HepG2 (cell line): ENCODE measurements at regions of chr22 and their contacts with region 1.

Region 1: GRCh38 chr22:36409911-36410756 is 22.4 kb upstream of the MYH9 start:
- DNase-seq: peak; percentile 97
- ATAC-seq: peak; percentile 94
- H3K4me3 ChIP-seq: peak overlapping the region; percentile 56 to 72 (median 56)
- H3K27ac ChIP-seq: peak overlapping the region; percentile 90
- H3K4me1 ChIP-seq: peaks cover 74% of the 10 kb centered on the region
- H3K27me3 ChIP-seq: no peaks in the 10 kb centered on the region
- CTCF ChIP-seq: no peak
- EP300 ChIP-seq: no peak
- POLR2A ChIP-seq: peak; percentile 83 to 87
- RAD21 ChIP-seq: no peak

Region 2: DNA sequence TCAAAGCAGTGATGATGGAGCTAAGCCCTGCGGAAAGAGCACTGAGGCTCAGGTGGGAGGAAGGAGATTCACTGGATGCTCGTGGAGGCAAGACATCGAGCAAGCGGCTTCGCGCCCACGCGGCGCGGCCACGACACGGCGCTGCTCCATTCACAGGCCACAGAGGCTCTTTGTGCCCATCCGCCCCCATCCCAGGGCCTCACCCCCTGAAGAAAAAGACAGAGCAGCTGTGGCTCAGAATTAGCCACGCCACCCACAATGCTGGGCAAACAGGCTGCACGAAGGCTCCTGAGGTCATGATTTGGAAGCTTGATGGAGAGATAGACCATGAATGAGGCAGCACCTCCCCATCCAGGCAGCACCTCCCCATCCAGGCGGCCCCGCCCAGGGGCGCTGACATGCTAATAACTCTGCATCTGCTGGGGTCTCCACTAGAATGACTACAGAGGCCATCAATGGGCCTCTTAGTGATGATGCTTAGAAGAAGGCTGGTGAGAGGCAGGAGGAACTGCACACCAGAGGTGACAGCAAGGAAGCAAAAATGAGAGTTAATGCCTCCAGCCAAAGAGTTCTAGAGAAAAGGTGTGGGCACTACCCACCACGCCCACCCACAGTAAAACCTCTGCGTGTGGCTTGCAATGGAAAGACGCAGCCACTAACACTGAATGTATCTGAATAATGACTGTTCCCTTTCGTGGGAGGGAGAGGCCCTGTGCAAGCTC is 65.9 kb before region 1 on chr22:
- CTCF ChIA-PET with region 1: no interaction called
- POLR2A ChIA-PET with region 1: interaction called, 12 read pairs
- in situ Hi-C with region 1: no loop called
- intact Hi-C with region 1: no loop called
- DNase-seq: no peak
- ATAC-seq: no peak; the same call in 2 of the 3 replicates
- H3K4me3 ChIP-seq: no peak overlapping the region
- H3K27ac ChIP-seq: peak overlapping the region; percentile 85
- H3K4me1 ChIP-seq: peaks cover 85% of the 10 kb centered on the region
- H3K27me3 ChIP-seq: no peaks in the 10 kb centered on the region
- CTCF ChIP-seq: no peak
- EP300 ChIP-seq: no peak
- POLR2A ChIP-seq: no peak
- RAD21 ChIP-seq: no peak

Region 3: GRCh38 chr22:36398621-36399469 is 11.3 kb before region 1 on chr22:
- CTCF ChIA-PET with region 1: no interaction called
- POLR2A ChIA-PET with region 1: interaction called, 15 read pairs
- in situ Hi-C with region 1: no loop called
- intact Hi-C with region 1: no loop called
- DNase-seq: peak; percentile 51
- ATAC-seq: no peak; the same call in 2 of the 3 replicates
- H3K4me3 ChIP-seq: no peak overlapping the region
- H3K27ac ChIP-seq: no peak overlapping the region
- H3K4me1 ChIP-seq: peaks cover 49% of the 10 kb centered on the region
- H3K27me3 ChIP-seq: no peaks in the 10 kb centered on the region
- CTCF ChIP-seq: no peak
- EP300 ChIP-seq: no peak
- POLR2A ChIP-seq: no peak
- RAD21 ChIP-seq: no peak

Region 4: DNA sequence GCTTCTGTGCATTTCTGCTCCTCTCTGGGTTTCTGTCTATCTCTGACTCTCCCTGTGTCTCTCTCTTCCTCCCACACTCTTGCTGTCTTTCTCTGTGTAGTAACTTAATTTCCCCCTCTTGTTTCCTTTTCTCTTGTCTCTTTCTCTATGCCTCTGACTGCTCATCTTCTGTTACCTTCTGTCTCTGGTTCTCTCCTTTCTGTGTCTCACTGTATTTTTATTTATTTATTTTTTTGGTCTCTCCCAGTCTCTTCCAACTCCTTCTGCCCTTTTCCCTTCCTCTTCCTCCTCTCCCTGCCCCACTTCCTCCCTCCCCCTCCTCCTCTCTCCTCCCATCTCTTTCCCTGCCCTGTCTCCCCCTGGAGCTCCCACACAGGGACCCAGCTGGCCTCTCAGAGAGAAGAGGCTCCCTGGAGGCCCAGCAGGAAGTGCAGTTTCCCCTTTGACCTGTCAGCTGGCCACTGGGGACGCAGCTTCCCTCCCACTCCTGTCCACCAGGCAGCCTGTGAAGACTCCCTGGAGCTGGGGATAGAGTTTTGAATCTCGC is 15.9 kb after region 1 on chr22:
- CTCF ChIA-PET with region 1: no interaction called
- POLR2A ChIA-PET with region 1: interaction called, 63 read pairs
- in situ Hi-C with region 1: no loop called
- intact Hi-C with region 1: no loop called
- DNase-seq: peak; percentile 74
- ATAC-seq: peak; percentile 93
- H3K4me3 ChIP-seq: no peak overlapping the region
- H3K27ac ChIP-seq: peak overlapping the region; percentile 71
- H3K4me1 ChIP-seq: peaks cover 69% of the 10 kb centered on the region
- H3K27me3 ChIP-seq: no peaks in the 10 kb centered on the region
- CTCF ChIP-seq: peak; percentile 53
- EP300 ChIP-seq: no peak; a peak in 1 of 4 replicates
- POLR2A ChIP-seq: peak in 1 of 2 experiments; percentile 34; a peak in 1 of 4 replicates
- RAD21 ChIP-seq: no peak

Region 5: DNA sequence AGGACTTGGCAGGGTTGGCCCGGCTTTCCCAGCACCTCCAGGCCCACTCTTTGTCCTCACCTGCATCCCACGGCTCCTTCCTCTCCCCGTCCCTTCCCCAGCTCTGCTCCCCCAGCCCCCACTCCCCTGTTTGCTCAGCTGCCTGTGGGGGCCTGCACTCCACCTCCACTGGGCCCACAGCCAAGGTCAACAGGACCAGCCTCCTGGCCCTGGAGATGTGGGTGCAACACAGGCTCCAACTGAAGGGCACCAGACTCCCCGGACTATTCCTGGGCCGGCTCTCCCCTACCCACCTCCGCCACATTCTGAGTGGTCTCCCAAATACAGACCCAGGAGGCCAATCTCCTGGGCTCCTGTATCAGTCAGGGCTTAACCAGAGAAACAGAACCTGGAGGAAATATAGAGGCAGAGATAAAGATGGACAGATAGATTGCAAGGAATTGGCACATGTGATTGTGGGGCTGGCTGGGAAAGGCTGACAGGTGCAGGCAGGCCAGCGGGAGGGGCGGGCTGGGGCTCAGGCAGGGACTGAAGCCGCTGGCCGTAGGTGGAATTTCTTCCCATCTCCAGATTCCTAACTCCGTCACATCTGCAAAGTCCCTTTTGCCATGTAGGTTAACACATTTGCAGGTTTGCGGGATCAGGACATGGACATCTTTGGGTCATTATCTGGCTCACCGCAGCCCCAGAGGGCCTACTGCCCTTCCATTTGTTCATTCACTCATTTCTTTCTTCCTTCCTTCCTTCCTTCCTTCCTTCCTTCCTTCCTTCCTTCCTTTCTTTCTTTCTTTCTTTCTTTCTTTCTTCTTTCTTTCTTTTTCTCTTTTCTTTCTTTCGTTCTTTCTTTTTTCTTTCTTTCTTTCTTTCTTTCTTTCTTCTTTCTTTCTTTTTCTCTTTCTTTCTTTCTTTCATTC is 23.4 kb after region 1 on chr22:
- CTCF ChIA-PET with region 1: no interaction called
- POLR2A ChIA-PET with region 1: interaction called, 36 read pairs
- in situ Hi-C with region 1: no loop called
- intact Hi-C with region 1: no loop called
- DNase-seq: peak; percentile 66
- ATAC-seq: peak; percentile 23
- H3K4me3 ChIP-seq: peak overlapping the region; percentile 11 to 66 (median 52); a peak in 5 of 6 replicates
- H3K27ac ChIP-seq: peak overlapping the region; percentile 89
- H3K4me1 ChIP-seq: peaks cover 74% of the 10 kb centered on the region
- H3K27me3 ChIP-seq: no peaks in the 10 kb centered on the region
- CTCF ChIP-seq: 0 out of 2 replicates have a peak, but pooled peaks have one; percentile 6
- EP300 ChIP-seq: peak in 1 of 2 experiments; percentile 93; a peak in 2 of 4 replicates
- POLR2A ChIP-seq: peak in 1 of 2 experiments; percentile 27; a peak in 1 of 4 replicates
- RAD21 ChIP-seq: no peak

Region 6: GRCh38 chr22:36481393-36482168 is 71.4 kb after region 1 on chr22 and contains the start of gene TXN2:
- CTCF ChIA-PET with region 1: no interaction called
- POLR2A ChIA-PET with region 1: interaction called, 10 read pairs
- in situ Hi-C with region 1: no loop called
- intact Hi-C with region 1: no loop called
- DNase-seq: peak; percentile 91
- ATAC-seq: peak; percentile 92
- H3K4me3 ChIP-seq: peak within 1 kb of the TSS; percentile 69 to 88 (median 88)
- H3K27ac ChIP-seq: peak within 1 kb of the TSS; percentile 96
- H3K4me1 ChIP-seq: peaks cover 24% of the 10 kb centered on the region
- H3K27me3 ChIP-seq: no peaks in the 10 kb centered on the region; a peak in 1 of 5 replicates
- CTCF ChIP-seq: no peak
- EP300 ChIP-seq: peak; percentile 10 to 13; a peak in 2 of 4 replicates
- POLR2A ChIP-seq: peak; percentile 89 to 90
- RAD21 ChIP-seq: no peak
- total RNA-seq, gene TXN2: 41.4 and 61.4 TPM in 2 replicates

Region 7: GRCh38 chr22:36684841-36685240 is 274.7 kb after region 1 on chr22:
- CTCF ChIA-PET with region 1: no interaction called
- POLR2A ChIA-PET with region 1: no interaction called
- in situ Hi-C with region 1: no loop called
- intact Hi-C with region 1: no loop called
- DNase-seq: no peak
- ATAC-seq: no peak
- H3K4me3 ChIP-seq: no peak overlapping the region
- H3K27ac ChIP-seq: no peak overlapping the region
- H3K4me1 ChIP-seq: no peaks in the 10 kb centered on the region
- H3K27me3 ChIP-seq: peaks cover 7 to 68% of the 10 kb centered on the region in 2 experiments
- CTCF ChIP-seq: no peak
- EP300 ChIP-seq: no peak
- POLR2A ChIP-seq: no peak
- RAD21 ChIP-seq: no peak